Stomach (tissue), 19 donors: ENCODE measurements at regions of chr1 and their contacts with region 1.

Region 1: DNA sequence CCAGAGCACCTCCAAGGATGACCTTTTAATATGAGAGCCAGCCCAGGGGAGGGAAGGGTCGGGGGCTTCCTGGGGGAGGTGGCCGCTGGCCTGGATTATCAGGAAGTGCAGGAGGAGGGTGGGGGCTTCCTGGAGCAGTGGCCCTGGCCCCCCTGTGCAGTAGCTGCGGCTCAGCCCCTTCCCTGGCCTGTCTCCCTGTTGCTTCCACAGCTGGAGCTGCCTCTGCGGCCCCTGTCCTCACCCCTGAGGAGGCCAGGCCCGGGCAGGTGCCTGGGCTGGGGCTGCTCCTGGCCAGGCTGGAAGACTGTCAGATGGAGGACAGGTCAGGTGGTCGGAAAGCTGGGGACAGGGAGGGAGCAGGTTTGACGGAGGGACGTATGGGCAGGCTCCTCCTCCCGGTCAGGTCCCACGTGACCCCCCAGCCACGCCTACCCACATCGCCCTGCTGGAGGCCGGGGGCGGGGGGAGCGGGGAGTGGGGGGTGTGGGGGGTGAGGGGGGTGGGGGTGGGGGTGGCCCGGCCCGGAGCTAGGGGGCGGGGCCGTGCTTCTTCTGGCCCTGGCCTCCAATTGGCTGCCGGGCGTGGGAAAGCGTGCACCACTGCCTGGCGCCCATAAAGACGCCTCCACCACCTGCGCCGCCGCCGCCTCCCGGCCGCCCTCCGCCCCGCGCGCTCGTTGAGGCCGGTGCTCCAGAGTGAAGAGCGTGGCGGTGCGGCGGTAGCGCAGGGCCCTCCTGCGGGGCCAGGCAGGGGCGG is 10.2 kb upstream of the TNFRSF14 start:
- DNase-seq: peak; percentile 94 to 96
- H3K4me3 ChIP-seq: peak overlapping the region; percentile 52 to 67 (median 54)
- H3K27ac ChIP-seq: peak overlapping the region; percentile 92 to 98 (median 97)
- H3K4me1 ChIP-seq: peaks cover 58 to 83% (median 73%) of the 10 kb centered on the region in 4 donors
- H3K27me3 ChIP-seq: peaks cover 0 to 49% (median 2%) of the 10 kb centered on the region in 3 donors
- CTCF ChIP-seq: no peak
- EP300 ChIP-seq: no peak
- POLR2A ChIP-seq: no peak

Region 2: GRCh38 chr1:2412519-2413233 is 133.3 kb before region 1 on chr1 and contains the start of gene PEX10:
- intact Hi-C with region 1: loop called (anchors 5 kb)
- DNase-seq: peak; percentile 99
- H3K4me3 ChIP-seq: peak within 1 kb of the TSS; percentile 80 to 100 (median 94)
- H3K27ac ChIP-seq: peak within 1 kb of the TSS; percentile 81 to 95 (median 91)
- H3K4me1 ChIP-seq: peaks cover 30 to 58% (median 50%) of the 10 kb centered on the region in 4 donors
- H3K27me3 ChIP-seq: peaks cover 0 to 30% (median 18%) of the 10 kb centered on the region in 3 donors
- CTCF ChIP-seq: no peak
- EP300 ChIP-seq: no peak
- POLR2A ChIP-seq: no peak
- total RNA-seq, gene PEX10: 0.87 to 27.2 (median 17.6) TPM